CD4-positive, alpha-beta memory T cell (primary cell): ENCODE measurements at regions of chr17 and their contacts with region 1.

Region 1: GRCh38 chr17:36722121-36722902 is 120.9 kb downstream of the MRM1 start:
- DNase-seq: peak; percentile 76 to 79 (median 79)
- H3K4me3 ChIP-seq: peak overlapping the region in 1 of 2 donors; percentile 69
- H3K4me3 Mint-ChIP-seq: peak overlapping the region; percentile 80 to 87 (median 86)
- H3K27ac ChIP-seq: peak overlapping the region; percentile 68
- H3K27ac Mint-ChIP-seq: peak overlapping the region; percentile 91 to 98 (median 95)
- H3K4me1 ChIP-seq: peaks cover 50% of the 10 kb centered on the region
- H3K4me1 Mint-ChIP-seq: peaks cover 33 to 68% (median 56%) of the 10 kb centered on the region in 4 donors
- H3K27me3 ChIP-seq: no peaks in the 10 kb centered on the region
- H3K27me3 Mint-ChIP-seq: no peaks in the 10 kb centered on the region

Region 2: DNA sequence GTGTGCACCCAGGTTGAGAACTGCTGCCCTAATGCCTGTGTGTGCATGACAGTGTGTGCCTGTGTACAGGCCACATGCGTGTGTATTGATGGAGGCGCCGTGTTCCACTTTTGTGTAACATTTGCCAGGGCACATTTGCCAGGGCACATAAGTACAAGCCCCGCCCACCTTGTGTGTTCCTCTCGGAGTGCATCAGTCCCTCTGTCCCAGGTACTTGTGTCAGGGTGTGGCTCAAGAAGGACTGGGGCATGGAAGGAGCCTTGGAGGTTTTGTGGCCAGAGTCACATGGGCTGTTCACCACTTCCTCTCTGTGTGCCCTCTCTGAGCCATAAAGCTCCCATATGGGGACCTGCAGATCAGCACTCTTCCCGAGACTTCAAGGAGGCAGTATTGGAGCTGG is 47.1 kb before region 1 on chr17:
- CTCF ChIA-PET with region 1: interaction called, 3 read pairs
- POLR2A ChIA-PET with region 1: interaction called, 5 read pairs
- intact Hi-C with region 1: loop called (anchors 1 kb)
- DNase-seq: peak in 3 of 5 donors; percentile 19 to 31 (median 24)
- H3K4me3 ChIP-seq: peak overlapping the region; percentile 28 to 52
- H3K4me3 Mint-ChIP-seq: peak overlapping the region in 7 of 8 donors; percentile 59 to 89 (median 76)
- H3K27ac ChIP-seq: peak overlapping the region; percentile 26
- H3K27ac Mint-ChIP-seq: peak overlapping the region; percentile 74 to 92 (median 89)
- H3K4me1 ChIP-seq: peaks cover 57% of the 10 kb centered on the region
- H3K4me1 Mint-ChIP-seq: peaks cover 37 to 59% (median 43%) of the 10 kb centered on the region in 4 donors
- H3K27me3 ChIP-seq: no peaks in the 10 kb centered on the region
- H3K27me3 Mint-ChIP-seq: no peaks in the 10 kb centered on the region

Region 3: DNA sequence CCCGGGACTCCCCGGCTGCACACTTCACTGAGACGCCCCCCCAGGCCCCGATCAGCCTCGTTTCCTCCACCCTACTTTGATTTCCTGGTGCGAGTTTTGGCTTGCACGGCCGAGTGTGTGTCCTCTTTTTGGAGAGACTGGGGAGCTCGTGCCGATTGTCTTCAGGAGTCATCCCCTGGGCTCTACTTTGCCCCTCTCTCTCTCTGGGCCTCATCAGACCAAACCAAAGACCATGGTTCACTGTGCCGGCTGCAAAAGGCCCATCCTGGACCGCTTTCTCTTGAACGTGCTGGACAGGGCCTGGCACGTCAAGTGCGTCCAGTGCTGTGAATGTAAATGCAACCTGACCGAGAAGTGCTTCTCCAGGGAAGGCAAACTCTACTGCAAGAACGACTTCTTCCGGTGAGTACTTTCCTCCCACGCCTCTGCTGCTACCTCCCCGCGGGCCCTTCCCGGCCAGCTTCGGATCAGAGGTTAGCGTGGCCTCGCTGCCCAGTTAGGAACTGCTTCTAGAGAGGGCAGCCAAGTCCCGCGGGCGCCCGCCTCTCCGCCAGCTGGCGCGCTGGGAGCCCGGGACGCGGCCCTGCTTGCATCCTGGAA is 215.8 kb after region 1 on chr17:
- CTCF ChIA-PET with region 1: no interaction called
- POLR2A ChIA-PET with region 1: no interaction called
- intact Hi-C with region 1: no loop called
- DNase-seq: peak in 2 of 5 donors; percentile 40 to 43
- H3K4me3 ChIP-seq: no peak overlapping the region
- H3K4me3 Mint-ChIP-seq: peak overlapping the region; percentile 71 to 88 (median 83)
- H3K27ac ChIP-seq: no peak overlapping the region
- H3K27ac Mint-ChIP-seq: peak overlapping the region in 5 of 7 donors; percentile 53 to 86 (median 78)
- H3K4me1 ChIP-seq: peaks cover 83% of the 10 kb centered on the region
- H3K4me1 Mint-ChIP-seq: peaks cover 37 to 79% (median 56%) of the 10 kb centered on the region in 4 donors
- H3K27me3 ChIP-seq: peaks cover 97% of the 10 kb centered on the region
- H3K27me3 Mint-ChIP-seq: peaks cover 66% of the 10 kb centered on the region in 2 donors

Region 4: DNA sequence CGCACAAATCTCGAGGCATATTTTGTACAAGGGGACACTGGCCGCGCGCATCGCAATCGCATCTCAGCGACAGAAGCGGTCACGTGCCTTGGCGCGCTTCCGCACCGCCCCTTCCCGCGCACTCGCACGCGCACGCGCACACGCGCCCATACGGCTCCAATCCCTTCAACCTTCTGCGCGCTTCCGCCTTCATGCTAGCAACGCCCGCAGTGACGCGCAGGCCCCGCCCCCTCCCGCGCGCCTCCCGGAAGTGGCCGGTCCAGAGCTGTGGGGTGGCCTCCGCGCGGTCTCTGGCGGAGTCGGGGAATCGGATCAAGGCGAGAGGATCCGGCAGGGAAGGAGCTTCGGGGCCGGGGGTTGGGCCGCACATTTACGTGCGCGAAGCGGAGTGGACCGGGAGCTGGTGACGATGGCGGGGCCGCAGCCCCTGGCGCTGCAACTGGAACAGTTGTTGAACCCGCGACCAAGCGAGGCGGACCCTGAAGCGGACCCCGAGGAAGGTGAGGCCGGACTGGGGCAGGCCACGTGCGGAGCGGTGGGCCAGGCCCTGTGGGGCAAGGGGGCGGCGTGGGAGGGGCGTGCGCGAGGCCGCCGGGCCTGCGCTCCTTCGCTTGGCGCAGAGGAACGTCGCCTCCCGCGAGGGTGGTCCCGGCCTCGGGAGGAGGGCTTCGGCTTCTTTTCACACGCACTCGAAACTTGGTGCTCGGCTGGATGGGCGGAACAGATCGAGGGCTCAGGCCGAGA is 226.6 kb after region 1 on chr17 and contains the start of gene AATF:
- CTCF ChIA-PET with region 1: no interaction called
- POLR2A ChIA-PET with region 1: interaction called, 13 read pairs
- intact Hi-C with region 1: loop called (anchors 2 kb)
- DNase-seq: peak; percentile 94 to 97 (median 96)
- H3K4me3 ChIP-seq: peak within 1 kb of the TSS; percentile 68 to 89
- H3K4me3 Mint-ChIP-seq: peak within 1 kb of the TSS; percentile 87 to 98 (median 97)
- H3K27ac ChIP-seq: peak within 1 kb of the TSS; percentile 86
- H3K27ac Mint-ChIP-seq: peak within 1 kb of the TSS; percentile 85 to 98 (median 96)
- H3K4me1 ChIP-seq: peaks cover 47% of the 10 kb centered on the region
- H3K4me1 Mint-ChIP-seq: peaks cover 31 to 63% (median 46%) of the 10 kb centered on the region in 4 donors
- H3K27me3 ChIP-seq: peaks cover 35% of the 10 kb centered on the region
- H3K27me3 Mint-ChIP-seq: peaks cover 24 to 27% of the 10 kb centered on the region in 2 donors
- total RNA-seq, gene AATF: 60.5 to 61.2 TPM